Left cardiac atrium (tissue), 4 donors: ENCODE measurements at regions of chr11 and their contacts with region 1.

Region 1: DNA sequence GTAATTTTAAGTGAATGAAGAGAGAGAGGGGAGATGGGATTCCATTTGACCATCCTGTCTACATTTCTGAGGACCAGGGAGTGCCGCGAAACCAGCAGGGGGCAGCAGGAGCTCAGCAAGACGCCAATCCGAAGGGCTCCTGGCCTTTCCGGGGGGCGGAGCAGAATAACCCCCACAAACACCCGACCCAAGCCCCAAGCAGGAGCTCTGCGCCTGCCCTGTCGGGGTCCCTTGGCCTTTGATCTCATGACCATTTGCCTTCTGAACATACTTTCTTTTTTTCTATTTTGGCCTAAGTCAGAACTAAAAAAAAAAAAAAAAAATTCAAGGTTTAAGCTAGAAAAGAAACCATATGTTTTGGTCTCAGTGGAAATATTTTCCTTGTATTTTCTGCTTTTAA is 21.9 kb upstream of the SCN2B start:
- DNase-seq: peak; percentile 89
- ATAC-seq: peak; percentile 55 to 66

Region 2: DNA sequence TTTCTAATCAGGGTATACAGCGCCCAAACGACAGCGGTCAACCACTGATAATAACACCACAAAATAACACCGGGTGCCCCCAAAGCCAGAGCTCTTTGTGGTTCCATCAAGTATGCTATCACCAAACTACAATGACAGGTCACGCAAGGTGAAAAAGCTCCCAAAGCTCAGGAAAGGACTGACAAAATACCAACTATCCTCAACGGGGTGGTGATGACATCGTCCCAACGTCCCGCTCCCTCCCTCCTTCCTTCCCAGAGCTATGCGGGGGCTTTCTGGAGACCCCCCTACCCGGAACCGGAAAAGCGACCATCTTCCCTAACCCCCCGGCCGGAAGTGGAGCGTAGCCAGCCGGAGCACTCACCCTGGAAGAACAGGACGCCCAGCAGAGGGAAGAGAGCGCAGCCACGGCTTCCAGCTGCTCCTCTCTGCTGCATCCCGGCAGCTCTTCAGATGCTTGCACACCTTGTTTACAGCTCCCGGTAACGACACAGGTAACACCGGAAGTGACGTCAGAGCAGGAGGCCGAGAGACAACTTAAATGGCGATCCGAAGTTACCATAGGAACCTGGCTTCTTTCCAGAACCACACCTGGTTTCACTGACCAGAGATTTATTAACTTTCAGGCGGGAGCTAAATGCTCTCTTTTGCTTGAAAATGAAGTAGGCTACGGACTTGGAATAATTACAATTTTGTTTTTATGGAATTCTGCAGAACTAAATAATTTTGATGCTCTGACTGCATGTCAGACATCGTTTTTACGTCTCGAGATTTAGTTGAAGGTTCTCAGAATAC is 53.7 kb after region 1 on chr11 and contains the start of gene MPZL3:
- intact Hi-C with region 1: loop called in 1 of 2 experiments (anchors 10 kb)
- DNase-seq: peak; percentile 81
- ATAC-seq: peak; percentile 82 to 86
- total RNA-seq, gene MPZL3: 1.0 to 1.1 TPM

Region 3: GRCh38 chr11:118290923-118291322 is 92.6 kb after region 1 on chr11:
- intact Hi-C with region 1: loop called (anchors 2 to 10 kb)
- DNase-seq: no peak
- ATAC-seq: peak; percentile 80

Region 4: GRCh38 chr11:118359295-118359958 is 161.1 kb after region 1 on chr11 and contains the start of gene UBE4A:
- intact Hi-C with region 1: loop called (anchors 5 to 10 kb)
- DNase-seq: peak; percentile 97
- ATAC-seq: peak; percentile 96 to 98
- total RNA-seq, gene UBE4A: 32.9 to 41.2 TPM

Region 5: GRCh38 chr11:118488480-118489109 is 290.2 kb after region 1 on chr11:
- intact Hi-C with region 1: loop called in 1 of 2 experiments (anchors 10 kb)
- DNase-seq: peak; percentile 44
- ATAC-seq: peak; percentile 65 to 67

Region 6: DNA sequence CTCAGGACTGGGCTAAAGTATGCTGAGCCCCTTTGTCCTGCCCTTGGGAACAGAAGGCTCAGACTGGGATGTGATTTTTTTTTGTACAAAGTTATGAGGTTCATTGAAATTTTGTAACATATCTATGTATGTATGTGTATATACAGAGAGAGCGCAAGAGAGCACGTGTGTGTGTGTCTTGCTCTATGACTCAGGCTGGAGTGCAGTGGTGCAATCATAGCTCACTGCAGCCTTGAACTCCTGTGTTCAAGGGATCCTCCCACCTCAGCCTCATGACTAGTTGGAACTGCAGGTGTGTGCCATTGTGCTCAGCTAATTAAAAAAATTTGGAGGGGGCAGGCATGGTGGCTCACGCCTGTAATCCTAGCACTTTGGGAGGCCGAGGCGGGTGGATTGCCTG is 338.4 kb after region 1 on chr11:
- intact Hi-C with region 1: no loop called
- DNase-seq: no peak
- ATAC-seq: no peak